ENCODE measurements at regions of chr3 and their contacts with region 1.

Region 1: GRCh38 chr3:172039436-172040077 is at the start of gene FNDC3B:
- DNase-seq: peak; percentile 95
- ATAC-seq: peak; percentile 73
- H3K4me3 ChIP-seq: peak within 1 kb of the TSS; percentile 95
- H3K27ac ChIP-seq: peak within 1 kb of the TSS; percentile 87
- H3K4me1 ChIP-seq: peaks cover 18% of the 10 kb centered on the region
- H3K27me3 ChIP-seq: no peaks in the 10 kb centered on the region
- CTCF ChIP-seq: no peak
- total RNA-seq, gene FNDC3B: 48.6 and 56.3 TPM in 2 replicates

Region 2: GRCh38 chr3:171809821-171810628 is 229.5 kb before region 1 on chr3 and contains the start of gene PLD1:
- CTCF ChIA-PET with region 1: no interaction called
- POLR2A ChIA-PET with region 1: interaction called, 9 read pairs
- intact Hi-C with region 1: loop called (anchors 1 kb)
- DNase-seq: peak; percentile 80
- ATAC-seq: peak; percentile 59
- H3K4me3 ChIP-seq: peak within 1 kb of the TSS; percentile 78
- H3K27ac ChIP-seq: peak within 1 kb of the TSS; percentile 90
- H3K4me1 ChIP-seq: peaks cover 50% of the 10 kb centered on the region
- H3K27me3 ChIP-seq: no peaks in the 10 kb centered on the region
- CTCF ChIP-seq: no peak
- total RNA-seq, gene PLD1: 7.3 and 8.3 TPM in 2 replicates

Region 3: DNA sequence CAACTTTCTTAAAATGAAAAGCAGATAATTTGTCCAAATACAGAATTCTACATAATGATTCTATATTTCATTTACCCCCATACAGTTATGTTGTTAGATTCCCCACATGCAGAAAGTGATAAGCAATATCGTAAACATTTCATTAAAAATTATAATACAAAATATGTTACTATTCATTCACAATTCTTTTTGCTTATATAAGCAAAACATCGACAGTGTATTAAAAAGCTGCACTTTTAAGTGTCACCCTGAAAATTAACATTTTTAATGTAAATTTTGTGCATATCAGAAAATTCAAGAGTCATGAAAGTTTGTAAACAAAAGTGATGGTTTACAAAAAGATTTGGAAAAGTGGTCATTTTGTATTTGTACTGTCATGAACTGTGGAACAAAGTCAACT is 177.2 kb before region 1 on chr3:
- CTCF ChIA-PET with region 1: no interaction called
- POLR2A ChIA-PET with region 1: interaction called, 15 read pairs
- intact Hi-C with region 1: no loop called
- DNase-seq: no peak
- ATAC-seq: no peak
- H3K4me3 ChIP-seq: no peak overlapping the region
- H3K27ac ChIP-seq: no peak overlapping the region
- H3K4me1 ChIP-seq: no peaks in the 10 kb centered on the region
- H3K27me3 ChIP-seq: no peaks in the 10 kb centered on the region
- CTCF ChIP-seq: no peak

Region 4: DNA sequence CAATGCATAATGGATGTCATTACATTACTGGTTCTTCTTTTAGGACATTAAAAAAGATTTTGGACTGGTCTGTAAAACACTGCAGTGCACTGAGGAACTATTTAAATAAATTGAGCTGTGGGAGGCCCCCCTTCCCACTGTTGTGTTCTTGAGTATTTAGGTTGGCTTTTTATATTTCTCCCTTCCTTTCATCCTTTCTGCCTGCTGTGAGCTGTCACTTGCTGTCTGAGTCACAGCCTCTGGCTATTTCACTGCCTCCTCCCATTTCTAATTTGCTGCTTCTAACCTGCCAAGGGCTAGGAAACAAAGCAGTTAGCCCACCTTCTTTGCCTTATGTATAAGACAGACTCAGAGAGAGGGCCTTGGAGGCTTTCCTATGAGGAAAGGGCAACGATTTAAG is 89.2 kb before region 1 on chr3:
- CTCF ChIA-PET with region 1: no interaction called
- POLR2A ChIA-PET with region 1: interaction called, 3 read pairs
- intact Hi-C with region 1: loop called (anchors 5 kb)
- DNase-seq: peak; percentile 76
- ATAC-seq: peak; percentile 53
- H3K4me3 ChIP-seq: no peak overlapping the region
- H3K27ac ChIP-seq: peak overlapping the region; percentile 38
- H3K4me1 ChIP-seq: peaks cover 68% of the 10 kb centered on the region
- H3K27me3 ChIP-seq: no peaks in the 10 kb centered on the region
- CTCF ChIP-seq: no peak

Region 5: DNA sequence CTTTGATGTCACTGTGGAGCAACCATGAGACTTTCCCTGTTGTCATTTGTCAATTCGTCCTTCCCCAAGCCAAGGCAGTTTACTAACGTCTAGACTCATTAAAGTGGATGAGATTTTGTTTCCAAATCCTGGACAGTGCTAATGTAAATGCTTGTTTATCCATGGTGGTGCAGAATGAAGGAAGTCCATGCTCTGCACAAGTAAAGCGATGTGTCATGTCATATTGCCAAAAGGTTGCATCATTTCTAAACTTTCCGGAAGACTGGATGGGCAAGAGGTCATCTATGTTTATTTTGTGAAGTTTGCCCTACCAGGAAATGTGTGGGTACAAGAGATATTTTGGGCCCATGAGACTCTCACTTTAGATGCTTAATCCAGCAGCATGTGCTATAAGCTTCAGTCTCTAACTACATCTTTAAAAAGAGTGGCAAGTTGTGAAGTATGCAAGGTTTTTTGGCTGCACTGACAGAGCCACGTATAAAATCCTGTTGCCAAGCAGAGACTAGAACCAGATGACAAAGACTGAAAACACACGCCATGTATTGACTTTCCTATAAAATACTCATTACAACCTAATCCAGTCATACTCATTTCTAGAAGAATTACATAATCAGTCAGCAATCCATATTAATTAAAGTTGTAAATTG is 72.3 kb before region 1 on chr3:
- CTCF ChIA-PET with region 1: no interaction called
- POLR2A ChIA-PET with region 1: no interaction called
- intact Hi-C with region 1: no loop called
- DNase-seq: peak; percentile 82
- ATAC-seq: peak; percentile 80
- H3K4me3 ChIP-seq: peak overlapping the region; percentile 6; the same call in 1 of the 2 replicates
- H3K27ac ChIP-seq: peak overlapping the region; percentile 70
- H3K4me1 ChIP-seq: peaks cover 24% of the 10 kb centered on the region
- H3K27me3 ChIP-seq: no peaks in the 10 kb centered on the region
- CTCF ChIP-seq: no peak

Region 6: GRCh38 chr3:172002512-172003078 is 37.0 kb before region 1 on chr3:
- CTCF ChIA-PET with region 1: no interaction called
- POLR2A ChIA-PET with region 1: interaction called, 3 read pairs
- intact Hi-C with region 1: loop called (anchors 5 kb)
- DNase-seq: no peak
- ATAC-seq: peak; percentile 81
- H3K4me3 ChIP-seq: 0 out of 2 replicates have a peak overlapping the region, but pooled peaks have one; percentile 4
- H3K27ac ChIP-seq: no peak overlapping the region
- H3K4me1 ChIP-seq: peaks cover 10% of the 10 kb centered on the region; the same call in 1 of the 2 replicates
- H3K27me3 ChIP-seq: no peaks in the 10 kb centered on the region
- CTCF ChIP-seq: no peak

Region 7: DNA sequence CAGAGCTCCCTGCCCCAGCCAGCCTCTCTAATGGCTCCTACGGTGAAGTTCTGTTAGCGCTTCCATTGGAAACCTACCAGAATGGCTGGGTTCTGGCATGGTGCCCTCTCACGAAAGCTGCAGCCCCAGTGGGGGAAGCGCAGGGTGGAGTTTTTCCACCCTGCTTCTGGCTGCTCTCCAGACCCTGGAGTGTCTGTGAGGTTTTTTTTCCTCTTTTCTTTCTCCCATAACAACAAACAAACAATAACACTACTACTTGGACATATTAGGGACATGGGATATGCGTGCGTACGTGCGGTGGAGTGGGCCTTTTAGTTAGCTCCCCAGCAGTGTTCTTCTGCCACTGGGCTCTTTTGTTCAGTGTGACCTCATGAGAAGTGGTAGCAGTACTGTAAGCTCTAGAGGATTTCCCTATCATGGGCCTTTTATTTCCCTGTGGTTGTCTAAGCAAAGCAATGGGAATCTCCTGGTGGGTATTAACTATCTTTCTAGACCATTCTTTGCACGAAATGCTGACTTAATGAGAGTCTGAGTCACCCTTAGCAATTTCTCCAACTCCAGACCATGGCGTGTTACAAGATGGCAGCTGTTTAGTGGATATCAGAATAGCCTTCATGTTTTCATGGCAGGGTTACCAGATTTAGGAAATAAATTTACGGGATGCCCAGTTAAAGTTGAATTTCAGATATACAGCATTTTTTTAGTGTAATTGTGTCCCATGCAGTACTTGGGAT is 161.7 kb after region 1 on chr3:
- CTCF ChIA-PET with region 1: interaction called, 3 read pairs
- POLR2A ChIA-PET with region 1: no interaction called
- intact Hi-C with region 1: loop called (anchors 10 kb)
- DNase-seq: no peak
- ATAC-seq: no peak
- H3K4me3 ChIP-seq: no peak overlapping the region
- H3K27ac ChIP-seq: no peak overlapping the region
- H3K4me1 ChIP-seq: peaks cover 36% of the 10 kb centered on the region
- H3K27me3 ChIP-seq: no peaks in the 10 kb centered on the region
- CTCF ChIP-seq: no peak

Measured in PC-3 (cell line).